ENCODE measurements at regions of chr5 and their contacts with region 1.

Region 1: DNA sequence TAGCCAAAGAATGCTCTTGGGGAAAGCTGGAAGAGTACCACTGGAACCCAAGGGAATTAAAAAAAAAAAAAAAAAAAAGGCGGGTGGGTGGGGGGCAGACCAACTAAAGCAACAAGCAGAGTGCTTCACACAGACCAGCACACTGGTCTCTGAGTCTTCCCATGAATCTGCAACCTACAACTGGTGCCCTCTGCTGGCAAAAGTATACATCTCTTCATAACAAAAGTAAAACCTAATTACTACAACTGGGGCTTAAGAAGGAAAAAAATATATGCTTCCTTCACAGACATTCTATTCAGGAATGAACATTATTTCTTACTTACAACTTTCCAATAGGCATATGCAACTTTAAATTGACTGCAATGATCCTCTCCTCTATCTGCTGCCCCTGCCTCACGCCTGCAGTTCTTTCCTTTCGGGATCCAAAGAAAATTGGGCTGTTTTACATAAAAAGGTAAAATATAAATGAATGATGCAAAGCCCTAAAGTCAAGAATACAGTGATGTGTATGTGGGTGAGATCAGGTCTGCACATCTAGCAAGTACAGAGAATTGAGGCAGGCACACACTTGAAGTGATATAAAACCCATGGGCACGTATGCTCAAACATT is 7.2 kb upstream of the KLHL3 start:
- DNase-seq: no peak
- H3K4me3 ChIP-seq: no peak overlapping the region
- CTCF ChIP-seq: peak; percentile 56

Region 2: DNA sequence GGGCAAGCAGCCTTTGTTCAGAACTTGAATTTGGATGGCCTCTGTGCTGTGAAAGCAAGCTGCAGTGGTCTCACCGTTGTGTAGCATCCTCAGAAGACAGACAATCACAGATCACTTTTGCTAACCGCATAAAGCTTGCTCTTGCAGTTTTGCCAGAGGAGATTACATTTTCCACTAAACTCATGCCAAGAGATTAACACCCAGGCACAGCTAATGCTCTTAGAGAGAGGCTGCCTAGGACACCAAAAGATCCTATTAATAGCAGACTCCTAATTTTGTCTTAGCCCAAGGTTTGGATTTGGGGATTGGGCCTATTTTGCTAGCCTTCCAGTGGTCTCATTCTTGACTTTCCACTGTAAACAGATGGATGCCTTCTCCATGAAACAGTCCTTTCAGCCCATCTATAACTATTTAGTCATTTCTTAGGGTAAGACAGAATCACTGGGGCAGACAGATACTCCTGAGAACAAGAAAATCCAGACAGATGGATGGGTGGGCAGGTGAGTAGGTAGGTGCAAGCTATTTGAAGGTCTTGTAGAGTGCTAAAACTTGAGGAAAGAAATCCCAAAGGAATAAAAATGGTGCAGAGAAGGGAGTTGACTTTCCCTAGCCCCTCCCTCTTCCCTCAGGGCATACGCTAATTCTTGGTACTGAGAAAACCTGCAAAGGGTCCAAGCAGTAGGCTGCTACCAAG is 750.2 kb before region 1 on chr5:
- CTCF ChIA-PET with region 1: no interaction called
- POLR2A ChIA-PET with region 1: no interaction called
- DNase-seq: no peak
- H3K4me3 ChIP-seq: no peak overlapping the region
- CTCF ChIP-seq: no peak

Region 3: GRCh38 chr5:137695651-137696428 is 47.3 kb before region 1 on chr5:
- CTCF ChIA-PET with region 1: interaction called, 10 read pairs
- POLR2A ChIA-PET with region 1: no interaction called
- DNase-seq: no peak
- H3K4me3 ChIP-seq: no peak overlapping the region
- CTCF ChIP-seq: no peak

Region 4: GRCh38 chr5:137728048-137728447 is 15.1 kb before region 1 on chr5:
- CTCF ChIA-PET with region 1: interaction called, 111 read pairs
- POLR2A ChIA-PET with region 1: no interaction called
- DNase-seq: no peak
- H3K4me3 ChIP-seq: no peak overlapping the region
- CTCF ChIP-seq: no peak

Region 5: DNA sequence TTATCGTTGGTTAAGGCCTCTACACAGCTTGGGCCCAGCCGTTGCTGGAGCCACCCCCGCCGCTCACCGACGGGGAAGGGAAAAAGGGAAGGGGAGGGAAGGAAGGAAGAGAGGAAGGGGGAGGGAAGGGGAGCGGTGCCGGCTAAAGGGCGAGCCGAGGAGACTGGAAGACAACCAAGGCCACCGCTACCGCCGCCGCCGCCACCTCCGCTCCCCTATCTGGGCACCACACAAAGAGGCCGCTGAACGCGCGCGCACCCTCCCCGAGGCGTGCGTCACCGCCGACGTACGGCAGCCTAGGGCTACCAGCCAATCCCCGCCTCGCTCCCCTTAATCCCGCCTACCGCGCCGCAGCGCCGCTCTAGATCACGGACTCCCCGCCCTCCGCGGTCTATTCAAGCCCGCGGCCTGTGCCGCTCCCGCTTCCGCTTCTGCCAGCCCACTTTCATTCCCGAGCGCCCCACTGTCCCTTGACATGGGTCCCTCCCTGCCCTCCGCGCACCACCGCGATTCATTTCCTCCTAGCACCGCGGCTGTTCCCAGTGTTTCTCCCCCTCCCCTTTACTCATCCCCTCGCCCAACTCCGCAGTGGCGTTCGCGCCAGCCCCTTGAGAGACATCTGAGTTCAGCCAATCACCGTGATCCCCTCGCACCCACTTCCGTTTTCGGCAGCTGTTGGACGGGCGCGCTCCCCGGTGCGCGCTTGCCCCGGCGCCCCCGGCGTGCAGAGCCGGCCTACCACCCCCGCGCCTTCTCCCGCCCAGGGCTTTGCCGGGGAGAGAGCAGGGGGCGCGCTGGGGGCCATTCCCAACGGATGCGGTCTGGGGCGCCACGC is 11.2 kb after region 1 on chr5 and contains the start of gene HNRNPA0:
- CTCF ChIA-PET with region 1: interaction called, 111 read pairs
- POLR2A ChIA-PET with region 1: no interaction called
- DNase-seq: peak; percentile 78
- H3K4me3 ChIP-seq: peak within 1 kb of the TSS; percentile 87
- CTCF ChIP-seq: no peak

Measured in AG04449 (cell line).